PC-3 (cell line): ENCODE measurements at regions of chr10 and their contacts with region 1.

Region 1: DNA sequence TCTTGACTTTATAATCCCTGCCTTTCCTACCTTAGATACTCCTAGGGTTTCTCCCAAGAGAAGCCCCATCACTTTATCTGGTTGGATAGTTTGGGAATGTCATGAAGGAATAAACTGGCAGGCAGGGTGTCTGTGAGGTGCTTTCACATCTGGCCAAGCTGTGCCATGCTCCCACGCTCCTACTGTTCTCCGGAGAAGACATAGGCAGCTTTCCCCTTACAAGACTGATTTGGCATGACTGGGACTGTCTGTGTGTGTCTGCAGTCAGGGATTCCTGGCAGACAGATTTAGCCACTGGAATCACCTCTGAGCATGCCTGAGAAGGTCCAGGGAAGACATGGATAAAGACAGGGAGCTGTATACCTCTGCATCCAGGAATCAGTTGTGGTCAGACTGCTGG is 45.3 kb downstream of the HK1 start:
- DNase-seq: no peak
- ATAC-seq: no peak
- H3K4me3 ChIP-seq: no peak overlapping the region
- H3K27ac ChIP-seq: no peak overlapping the region
- H3K4me1 ChIP-seq: peaks cover 16% of the 10 kb centered on the region
- H3K27me3 ChIP-seq: no peaks in the 10 kb centered on the region
- CTCF ChIP-seq: no peak

Region 2: DNA sequence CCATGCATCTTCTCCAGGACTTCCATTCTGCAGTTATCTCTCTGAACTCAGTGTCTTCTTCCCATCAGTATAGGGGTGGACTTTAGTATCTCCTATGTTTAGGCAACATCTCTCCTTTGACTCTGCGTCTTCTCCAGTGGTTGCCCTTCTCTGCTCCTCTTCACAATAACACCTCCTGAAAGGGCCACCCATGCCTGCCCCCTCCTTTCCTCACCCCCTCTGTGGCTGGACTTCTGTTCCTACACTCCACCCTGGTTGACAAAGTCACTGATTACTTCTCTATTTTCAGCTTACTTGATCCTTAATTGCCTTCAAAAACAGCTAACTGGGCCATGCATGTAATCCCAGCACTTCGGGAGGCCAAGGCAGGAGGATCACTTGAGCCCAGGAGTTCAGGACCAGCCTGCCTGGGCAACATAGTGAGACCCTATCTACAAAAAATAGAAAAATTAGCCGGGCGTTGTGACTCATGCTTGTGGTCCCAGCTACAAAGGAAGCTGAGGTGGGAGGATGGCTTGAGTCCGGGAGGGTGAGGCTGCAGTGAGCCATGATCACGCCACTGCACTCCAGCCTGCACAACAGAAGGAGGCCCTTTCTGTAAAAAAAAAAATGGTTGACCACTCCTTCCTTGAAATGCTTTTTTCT is 222.0 kb before region 1 on chr10:
- CTCF ChIA-PET with region 1: no interaction called
- POLR2A ChIA-PET with region 1: no interaction called
- intact Hi-C with region 1: no loop called
- DNase-seq: peak; percentile 63
- ATAC-seq: peak; percentile 85
- H3K4me3 ChIP-seq: no peak overlapping the region
- H3K27ac ChIP-seq: no peak overlapping the region
- H3K4me1 ChIP-seq: peaks cover 4% of the 10 kb centered on the region; the same call in 1 of the 2 replicates
- H3K27me3 ChIP-seq: no peaks in the 10 kb centered on the region
- CTCF ChIP-seq: no peak

Region 3: GRCh38 chr10:69303632-69304051 is 20.0 kb before region 1 on chr10:
- CTCF ChIA-PET with region 1: no interaction called
- POLR2A ChIA-PET with region 1: interaction called, 35 read pairs
- intact Hi-C with region 1: no loop called
- DNase-seq: peak; percentile 84
- ATAC-seq: peak; percentile 53
- H3K4me3 ChIP-seq: no peak overlapping the region
- H3K27ac ChIP-seq: no peak overlapping the region
- H3K4me1 ChIP-seq: peaks cover 10% of the 10 kb centered on the region
- H3K27me3 ChIP-seq: no peaks in the 10 kb centered on the region
- CTCF ChIP-seq: no peak